ENCODE measurements at regions of chr16 and their contacts with region 1.

Region 1: GRCh38 chr16:25111403-25112166 is at the start of gene LCMT1:
- DNase-seq: peak; percentile 95 to 99 (median 96)
- H3K4me3 ChIP-seq: peak within 1 kb of the TSS; percentile 59 to 96 (median 88)
- H3K4me3 Mint-ChIP-seq: peak within 1 kb of the TSS; percentile 88 to 95
- H3K27ac ChIP-seq: peak within 1 kb of the TSS; percentile 74 to 90
- H3K27ac Mint-ChIP-seq: peak within 1 kb of the TSS; percentile 82 to 94 (median 93)
- H3K4me1 ChIP-seq: peaks cover 34 to 36% of the 10 kb centered on the region in 2 donors
- H3K4me1 Mint-ChIP-seq: peaks cover 41% of the 10 kb centered on the region
- H3K27me3 ChIP-seq: no peaks in the 10 kb centered on the region
- H3K27me3 Mint-ChIP-seq: peaks cover 0 to 1% (median 0%) of the 10 kb centered on the region in 3 donors
- CTCF ChIP-seq: no peak
- polyA plus RNA-seq, gene LCMT1: 27.2 to 34.2 (median 33.1) TPM

Region 2: DNA sequence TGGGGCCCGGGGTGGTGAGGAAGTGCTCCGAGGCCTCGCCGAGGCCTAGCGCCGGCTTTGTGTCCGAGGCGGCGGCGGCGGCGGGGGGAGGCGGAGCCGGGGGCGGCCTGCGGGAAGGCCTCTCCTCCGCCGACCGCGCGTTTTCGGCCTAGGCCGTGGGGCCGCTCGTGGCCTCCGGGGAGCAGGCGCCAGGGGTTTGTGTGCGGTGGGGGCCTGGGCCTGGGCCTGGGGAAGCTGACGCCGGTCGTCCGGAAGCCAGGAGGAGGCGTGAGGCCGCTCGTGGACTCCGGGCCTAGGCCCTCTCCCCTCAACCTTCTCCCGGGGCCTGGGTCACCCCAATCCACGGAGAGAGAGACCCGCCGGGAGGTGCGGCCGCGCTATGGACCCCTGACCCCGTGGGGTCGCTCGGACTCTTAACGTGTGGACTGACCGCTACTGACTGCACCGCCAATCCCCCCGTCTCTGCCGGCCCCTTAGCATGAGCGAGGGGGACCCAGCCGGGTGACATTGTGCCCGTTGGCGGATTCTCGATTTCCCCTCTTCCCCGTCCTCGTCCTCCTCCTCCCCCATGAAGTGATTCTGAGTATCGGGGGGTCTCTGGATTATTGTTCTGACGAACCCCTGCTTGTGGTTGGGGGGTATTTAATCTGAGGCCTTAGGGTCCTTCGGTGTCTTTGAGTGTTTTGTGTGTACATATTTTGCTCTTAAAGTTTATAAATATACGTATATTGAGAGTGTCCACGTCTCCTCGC is 571.6 kb before region 1 on chr16:
- intact Hi-C with region 1: loop called in 1 of 2 experiments (anchors 5 kb)
- DNase-seq: peak in 1 of 3 donors; percentile 31
- H3K4me3 ChIP-seq: peak overlapping the region; percentile 70 to 98 (median 80)
- H3K4me3 Mint-ChIP-seq: peak overlapping the region; percentile 87 to 98
- H3K27ac ChIP-seq: peak overlapping the region; percentile 97
- H3K27ac Mint-ChIP-seq: peak overlapping the region; percentile 94 to 100 (median 100)
- H3K4me1 ChIP-seq: peaks cover 35% of the 10 kb centered on the region in 2 donors
- H3K4me1 Mint-ChIP-seq: peaks cover 30% of the 10 kb centered on the region
- H3K27me3 ChIP-seq: no peaks in the 10 kb centered on the region
- H3K27me3 Mint-ChIP-seq: peaks cover 0 to 1% (median 0%) of the 10 kb centered on the region in 3 donors
- CTCF ChIP-seq: no peak

Region 3: GRCh38 chr16:24972608-24973220 is 138.9 kb before region 1 on chr16:
- intact Hi-C with region 1: no loop called
- DNase-seq: no peak
- H3K4me3 ChIP-seq: no peak overlapping the region
- H3K4me3 Mint-ChIP-seq: no peak overlapping the region
- H3K27ac ChIP-seq: peak overlapping the region in 1 of 2 donors; percentile 4
- H3K27ac Mint-ChIP-seq: peak overlapping the region in 1 of 7 donors; percentile 66
- H3K4me1 ChIP-seq: peaks cover 6 to 10% of the 10 kb centered on the region in 2 donors
- H3K4me1 Mint-ChIP-seq: peaks cover 14% of the 10 kb centered on the region
- H3K27me3 ChIP-seq: no peaks in the 10 kb centered on the region
- H3K27me3 Mint-ChIP-seq: no peaks in the 10 kb centered on the region
- CTCF ChIP-seq: no peak

Region 4: GRCh38 chr16:25031441-25032307 is 79.9 kb before region 1 on chr16:
- intact Hi-C with region 1: loop called in 1 of 2 experiments (anchors 5 kb)
- DNase-seq: peak; percentile 93 to 97 (median 95)
- H3K4me3 ChIP-seq: peak overlapping the region; percentile 87 to 97 (median 90)
- H3K4me3 Mint-ChIP-seq: peak overlapping the region; percentile 91 to 95
- H3K27ac ChIP-seq: peak overlapping the region; percentile 3 to 86
- H3K27ac Mint-ChIP-seq: peak overlapping the region in 6 of 7 donors; percentile 71 to 96 (median 88)
- H3K4me1 ChIP-seq: peaks cover 20 to 25% of the 10 kb centered on the region in 2 donors
- H3K4me1 Mint-ChIP-seq: peaks cover 35% of the 10 kb centered on the region
- H3K27me3 ChIP-seq: no peaks in the 10 kb centered on the region
- H3K27me3 Mint-ChIP-seq: peaks cover 0 to 1% (median 0%) of the 10 kb centered on the region in 3 donors
- CTCF ChIP-seq: no peak

Region 5: DNA sequence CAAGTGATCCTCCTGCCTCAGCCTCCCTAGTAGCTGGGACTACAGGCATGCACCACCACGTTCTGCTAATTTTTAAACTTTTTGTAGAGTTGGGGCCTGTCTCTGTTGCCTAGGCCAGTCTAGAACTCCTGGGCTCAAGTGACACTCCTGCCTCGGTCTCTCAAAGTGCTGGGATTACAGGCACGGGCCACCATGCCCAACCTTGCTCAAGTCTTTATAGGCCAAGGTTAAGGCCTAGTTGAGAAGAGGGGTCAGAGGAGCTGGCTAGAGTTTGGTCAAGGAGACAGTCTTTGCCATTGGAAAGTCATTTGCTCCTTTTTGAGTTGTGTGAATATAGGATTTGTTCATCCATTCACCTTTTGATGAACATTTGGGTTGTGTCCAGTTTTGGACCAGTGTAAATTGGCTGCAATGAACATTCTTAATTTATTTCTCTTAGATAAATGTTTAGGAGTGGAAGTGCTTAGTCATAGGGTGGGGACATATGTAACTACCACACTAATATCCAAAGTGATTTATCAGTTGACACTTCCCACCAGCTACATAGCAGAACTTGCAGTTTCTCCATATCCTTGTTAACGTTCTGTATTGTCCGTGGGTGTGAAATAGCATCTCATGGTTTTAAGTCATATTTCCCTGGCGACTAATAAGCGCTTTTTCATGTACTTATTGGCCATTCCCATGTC is 65.7 kb before region 1 on chr16:
- intact Hi-C with region 1: loop called in 1 of 2 experiments (anchors 5 kb)
- DNase-seq: peak in 1 of 3 donors; percentile 12
- H3K4me3 ChIP-seq: no peak overlapping the region
- H3K4me3 Mint-ChIP-seq: no peak overlapping the region
- H3K27ac ChIP-seq: no peak overlapping the region
- H3K27ac Mint-ChIP-seq: peak overlapping the region in 3 of 7 donors; percentile 15 to 74 (median 47)
- H3K4me1 ChIP-seq: peaks cover 16 to 34% of the 10 kb centered on the region in 2 donors
- H3K4me1 Mint-ChIP-seq: peaks cover 34% of the 10 kb centered on the region
- H3K27me3 ChIP-seq: no peaks in the 10 kb centered on the region
- H3K27me3 Mint-ChIP-seq: peaks cover 0 to 1% (median 0%) of the 10 kb centered on the region in 3 donors
- CTCF ChIP-seq: no peak

Region 6: DNA sequence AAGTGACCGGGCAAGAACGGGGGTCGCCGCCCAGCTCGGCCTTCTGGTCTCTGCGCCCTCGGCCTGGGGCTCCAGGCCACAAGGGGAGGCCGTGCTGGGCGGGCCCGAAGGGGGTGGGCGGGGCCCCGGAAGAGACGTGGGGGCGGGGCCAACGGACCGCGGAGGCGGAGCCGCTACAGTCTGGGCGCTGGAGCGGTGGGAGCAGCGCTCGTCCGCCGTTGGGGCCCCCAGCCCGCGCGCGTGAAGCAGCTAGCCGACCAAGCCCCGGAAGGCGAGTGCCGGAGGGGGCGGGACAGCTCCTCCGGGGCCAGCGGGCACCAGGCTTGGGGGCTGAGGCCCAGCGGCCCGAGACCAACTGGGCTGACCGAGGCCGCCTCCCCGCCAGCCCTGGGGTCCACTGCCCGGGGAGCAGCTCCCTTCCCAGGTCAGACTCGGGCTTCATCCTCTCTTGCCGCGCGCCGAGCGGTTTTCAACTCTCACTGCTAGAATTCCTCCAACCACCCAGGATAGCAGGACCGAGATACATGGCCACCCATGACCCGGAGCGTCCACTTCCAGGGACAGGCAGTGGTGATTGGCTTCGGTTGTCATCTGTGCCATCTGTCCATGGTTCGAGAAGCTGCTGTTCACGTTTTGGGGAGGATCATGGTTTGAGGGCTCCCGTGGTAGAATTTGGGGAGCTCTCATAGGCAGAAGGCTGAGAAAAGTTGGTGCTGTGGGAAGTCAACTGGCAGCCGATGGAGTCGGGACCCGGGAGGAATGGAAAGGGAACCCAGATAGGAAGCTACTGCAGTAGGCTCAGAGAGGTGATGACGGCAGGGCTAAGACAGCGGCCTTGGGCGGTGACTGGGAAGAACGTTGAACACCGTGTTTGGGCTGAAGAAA is 44.6 kb before region 1 on chr16:
- intact Hi-C with region 1: loop called (anchors 2 to 5 kb)
- DNase-seq: peak; percentile 75 to 79 (median 77)
- H3K4me3 ChIP-seq: peak overlapping the region; percentile 64 to 94 (median 74)
- H3K4me3 Mint-ChIP-seq: peak overlapping the region; percentile 99
- H3K27ac ChIP-seq: peak overlapping the region; percentile 63 to 94
- H3K27ac Mint-ChIP-seq: peak overlapping the region; percentile 88 to 96 (median 93)
- H3K4me1 ChIP-seq: peaks cover 20 to 24% of the 10 kb centered on the region in 2 donors
- H3K4me1 Mint-ChIP-seq: peaks cover 36% of the 10 kb centered on the region
- H3K27me3 ChIP-seq: no peaks in the 10 kb centered on the region
- H3K27me3 Mint-ChIP-seq: no peaks in the 10 kb centered on the region
- CTCF ChIP-seq: no peak

Region 7: DNA sequence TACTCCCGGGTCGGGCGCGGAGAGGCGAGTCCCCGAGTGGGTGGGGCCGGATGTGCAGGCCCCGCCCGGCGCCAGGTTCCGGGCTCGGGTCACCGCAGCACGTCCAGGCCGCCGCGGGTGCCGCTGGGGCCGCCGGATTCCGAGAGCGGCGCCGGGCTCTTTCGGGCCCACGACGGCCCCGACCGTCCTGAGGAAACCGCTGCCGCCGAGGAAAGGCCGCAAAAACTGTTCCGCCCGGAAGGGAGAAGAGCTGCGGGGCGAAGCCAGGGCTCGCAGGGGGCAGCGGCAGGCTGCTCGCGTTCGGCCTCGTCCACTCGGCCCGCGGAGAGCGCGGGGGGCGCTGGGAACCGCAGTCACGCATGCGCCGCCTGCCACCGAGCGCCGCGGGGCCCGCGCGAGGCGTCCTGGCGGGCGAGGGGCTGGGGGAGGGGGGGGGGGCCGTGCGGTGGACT is 145.9 kb after region 1 on chr16 and contains the start of gene ZKSCAN2:
- intact Hi-C with region 1: loop called in 1 of 2 experiments (anchors 2 kb)
- DNase-seq: peak; percentile 74 to 81 (median 80)
- H3K4me3 ChIP-seq: peak within 1 kb of the TSS; percentile 81 to 94 (median 83)
- H3K4me3 Mint-ChIP-seq: peak within 1 kb of the TSS; percentile 94
- H3K27ac ChIP-seq: peak within 1 kb of the TSS; percentile 91 to 97
- H3K27ac Mint-ChIP-seq: peak within 1 kb of the TSS; percentile 93 to 97 (median 95)
- H3K4me1 ChIP-seq: peaks cover 18 to 29% of the 10 kb centered on the region in 2 donors
- H3K4me1 Mint-ChIP-seq: peaks cover 35% of the 10 kb centered on the region
- H3K27me3 ChIP-seq: no peaks in the 10 kb centered on the region
- H3K27me3 Mint-ChIP-seq: peaks cover 0 to 3% (median 1%) of the 10 kb centered on the region in 3 donors
- CTCF ChIP-seq: no peak
- polyA plus RNA-seq, gene ZKSCAN2: 0.44 to 0.79 (median 0.56) TPM

Measured in CD14-positive monocyte (primary cell).